ENCODE measurements at regions of chr11 and their contacts with region 1.

Region 1: GRCh38 chr11:2892215-2893020 is 6.8 kb upstream of the CDKN1C start:
- DNase-seq: peak; percentile 84
- ATAC-seq: peak; percentile 67
- H3K4me3 Mint-ChIP-seq: peak overlapping the region; percentile 68
- H3K27ac Mint-ChIP-seq: 0 out of 2 replicates have a peak overlapping the region, but pooled peaks have one; percentile 23
- H3K4me1 Mint-ChIP-seq: peaks cover 11% of the 10 kb centered on the region
- H3K27me3 Mint-ChIP-seq: peaks cover 56% of the 10 kb centered on the region
- CTCF ChIP-seq: peak; percentile 93

Region 2: GRCh38 chr11:2827256-2827655 is 65.2 kb before region 1 on chr11:
- CTCF ChIA-PET with region 1: no interaction called
- POLR2A ChIA-PET with region 1: no interaction called
- DNase-seq: no peak
- ATAC-seq: no peak
- H3K4me3 Mint-ChIP-seq: no peak overlapping the region
- H3K27ac Mint-ChIP-seq: no peak overlapping the region
- H3K4me1 Mint-ChIP-seq: peaks cover 12% of the 10 kb centered on the region
- H3K27me3 Mint-ChIP-seq: peaks cover 62% of the 10 kb centered on the region
- CTCF ChIP-seq: no peak

Region 3: DNA sequence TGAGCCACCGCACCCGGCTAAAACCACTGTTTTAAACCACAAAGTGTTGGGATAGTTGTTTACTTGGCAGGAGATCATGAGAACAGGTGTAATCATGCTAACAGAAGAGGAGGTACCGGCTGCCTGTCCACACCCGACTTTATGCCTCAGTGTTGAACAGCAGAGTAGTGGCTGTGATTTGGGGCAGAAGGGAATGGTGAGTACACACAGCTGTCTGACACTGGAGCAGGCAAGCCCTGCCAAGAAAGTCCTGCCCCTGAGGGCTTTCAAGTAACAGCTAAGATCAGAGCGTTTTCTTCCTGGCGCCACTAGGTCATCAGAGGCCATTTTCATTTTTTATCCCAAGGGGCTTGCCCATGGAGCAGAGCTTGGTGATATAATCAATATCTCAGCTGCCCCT is 14.9 kb before region 1 on chr11:
- CTCF ChIA-PET with region 1: interaction called, 12 read pairs
- POLR2A ChIA-PET with region 1: no interaction called
- DNase-seq: no peak
- ATAC-seq: no peak
- H3K4me3 Mint-ChIP-seq: no peak overlapping the region
- H3K27ac Mint-ChIP-seq: no peak overlapping the region
- H3K4me1 Mint-ChIP-seq: peaks cover 4% of the 10 kb centered on the region
- H3K27me3 Mint-ChIP-seq: peaks cover 96% of the 10 kb centered on the region
- CTCF ChIP-seq: no peak

Region 4: DNA sequence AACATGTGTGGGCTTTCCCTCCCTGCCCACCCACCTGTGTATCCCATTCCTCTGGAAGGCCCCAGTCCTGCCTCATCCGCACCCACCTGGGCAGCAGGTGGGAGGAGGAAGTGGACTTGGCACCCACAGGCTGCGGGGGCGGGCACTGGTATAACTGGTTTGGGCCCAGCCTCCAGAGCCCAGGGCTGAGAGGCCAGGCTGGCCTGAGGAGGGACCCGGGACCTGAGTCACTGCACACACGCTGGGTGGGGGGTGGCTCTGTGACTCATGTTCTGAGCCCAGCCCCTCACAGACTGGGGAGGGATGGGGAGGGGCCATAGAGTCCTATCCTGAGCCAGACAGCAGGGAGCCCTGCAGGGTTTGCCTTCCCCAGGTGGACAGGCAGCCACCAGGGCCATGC is 20.1 kb after region 1 on chr11:
- CTCF ChIA-PET with region 1: interaction called, 16 read pairs
- POLR2A ChIA-PET with region 1: no interaction called
- DNase-seq: no peak
- ATAC-seq: peak; percentile 28
- H3K4me3 Mint-ChIP-seq: no peak overlapping the region
- H3K27ac Mint-ChIP-seq: no peak overlapping the region
- H3K4me1 Mint-ChIP-seq: no peaks in the 10 kb centered on the region
- H3K27me3 Mint-ChIP-seq: peaks cover 20% of the 10 kb centered on the region
- CTCF ChIP-seq: no peak

Measured in WTC11 (cell line).